ENCODE measurements at regions of chr3 and their contacts with region 1.

Region 1: GRCh38 chr3:98980915-98981596 is 79.6 kb upstream of the DCBLD2 start:
- DNase-seq: peak; percentile 57
- ATAC-seq: peak; percentile 49
- H3K4me3 ChIP-seq: peak overlapping the region; percentile 16 to 37; a peak in 3 of 4 replicates
- H3K27ac ChIP-seq: peak overlapping the region; percentile 88
- H3K4me1 ChIP-seq: peaks cover 90 to 100% of the 10 kb centered on the region in 2 experiments
- H3K27me3 ChIP-seq: no peaks in the 10 kb centered on the region
- CTCF ChIP-seq: no peak
- POLR2A ChIP-seq: no peak
- RAD21 ChIP-seq: no peak

Region 2: DNA sequence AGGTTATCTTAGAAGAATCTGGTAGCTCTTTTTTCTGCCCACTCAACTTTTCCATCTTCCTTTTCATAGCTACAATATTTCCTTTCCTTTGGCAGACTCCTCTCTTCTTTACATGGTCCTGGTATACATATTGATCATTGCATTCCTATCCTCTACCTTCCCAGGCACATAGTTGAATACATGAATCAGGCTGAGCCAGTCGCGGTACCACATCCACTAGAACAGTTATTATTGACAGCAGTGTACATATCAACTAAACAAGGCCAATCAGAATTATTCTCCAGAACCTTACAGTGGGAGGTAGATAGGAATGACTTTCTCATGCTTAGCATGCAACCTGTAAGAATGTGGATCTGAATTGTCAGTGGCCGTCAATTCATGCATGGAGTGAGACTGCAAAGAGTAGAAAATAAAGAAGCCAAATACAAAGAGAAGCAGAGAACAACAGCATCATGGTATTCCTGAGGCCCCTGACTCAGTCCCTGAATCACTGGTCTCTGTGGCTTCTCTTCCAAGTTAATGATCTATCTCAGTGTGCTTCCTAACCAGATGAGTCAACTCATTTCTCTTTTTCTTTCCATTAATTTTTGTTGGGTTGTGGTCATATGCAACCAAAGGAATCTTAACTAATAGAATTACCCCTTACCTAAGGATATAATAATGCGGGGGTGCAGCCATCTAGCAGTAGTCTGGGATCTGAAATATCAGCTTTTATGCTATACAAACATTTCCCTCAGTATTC is 18.7 kb before region 1 on chr3:
- CTCF ChIA-PET with region 1: no interaction called
- POLR2A ChIA-PET with region 1: interaction called, 90 read pairs
- RAD21 ChIA-PET with region 1: no interaction called
- intact Hi-C with region 1: no loop called
- DNase-seq: peak; percentile 92
- ATAC-seq: peak; percentile 77
- H3K4me3 ChIP-seq: peak overlapping the region in 1 of 2 experiments; percentile 32; a peak in 3 of 4 replicates
- H3K27ac ChIP-seq: peak overlapping the region; percentile 97
- H3K4me1 ChIP-seq: peaks cover 91 to 95% of the 10 kb centered on the region in 2 experiments
- H3K27me3 ChIP-seq: no peaks in the 10 kb centered on the region
- CTCF ChIP-seq: no peak
- POLR2A ChIP-seq: no peak
- RAD21 ChIP-seq: no peak; the same call in 1 of the 2 replicates

Measured in HCT116 (cell line).